ENCODE measurements at regions of chr10 and their contacts with region 1.

Region 1: DNA sequence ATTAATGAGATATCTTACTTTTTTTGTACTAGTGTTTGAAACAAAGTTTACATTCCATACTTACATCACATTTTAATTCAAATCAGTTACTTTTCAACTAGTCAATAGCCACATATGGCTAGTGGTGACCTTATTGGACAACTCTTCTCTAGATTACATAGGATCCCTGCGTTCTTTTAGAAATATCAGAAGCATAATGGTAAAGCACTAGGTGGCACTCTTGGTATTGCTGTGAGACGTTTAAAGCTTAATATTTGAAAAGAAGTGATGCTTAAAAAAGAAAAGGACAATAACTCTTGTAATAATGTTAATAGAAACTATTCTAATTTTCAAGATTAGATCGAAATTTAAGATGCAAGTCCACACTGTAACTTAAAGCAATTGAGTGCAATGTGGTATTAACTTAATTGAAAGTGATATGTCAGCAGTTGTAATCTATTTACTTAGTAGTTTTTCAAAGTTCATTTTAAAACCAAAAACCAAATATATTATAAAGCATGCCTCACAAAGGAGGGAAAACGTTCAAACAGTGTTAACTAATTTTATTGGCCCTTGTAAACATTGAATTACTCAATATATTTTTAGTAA is 339.1 kb downstream of the ATRNL1 start:
- DNase-seq: no peak
- ATAC-seq: 0 out of 2 replicates have a peak, but pooled peaks have one; percentile 65
- H3K4me3 ChIP-seq: no peak overlapping the region
- H3K27ac ChIP-seq: no peak overlapping the region
- H3K4me1 ChIP-seq: no peaks in the 10 kb centered on the region
- H3K27me3 ChIP-seq: no peaks in the 10 kb centered on the region
- CTCF ChIP-seq: peak; percentile 68; the same call in 1 of the 2 replicates

Region 2: GRCh38 chr10:115141254-115141653 is 291.0 kb before region 1 on chr10:
- CTCF ChIA-PET with region 1: no interaction called
- POLR2A ChIA-PET with region 1: interaction called, 12 read pairs
- in situ Hi-C with region 1: no loop called
- intact Hi-C with region 1: no loop called
- DNase-seq: no peak
- ATAC-seq: no peak
- H3K4me3 ChIP-seq: no peak overlapping the region
- H3K27ac ChIP-seq: no peak overlapping the region
- H3K4me1 ChIP-seq: no peaks in the 10 kb centered on the region
- H3K27me3 ChIP-seq: no peaks in the 10 kb centered on the region
- CTCF ChIP-seq: peak; percentile 60; the same call in 1 of the 2 replicates

Region 3: GRCh38 chr10:115417585-115418265 is 14.6 kb before region 1 on chr10:
- CTCF ChIA-PET with region 1: no interaction called
- POLR2A ChIA-PET with region 1: no interaction called
- in situ Hi-C with region 1: no loop called
- intact Hi-C with region 1: no loop called
- DNase-seq: peak; percentile 27
- ATAC-seq: peak; percentile 98
- H3K4me3 ChIP-seq: no peak overlapping the region
- H3K27ac ChIP-seq: no peak overlapping the region
- H3K4me1 ChIP-seq: no peaks in the 10 kb centered on the region
- H3K27me3 ChIP-seq: no peaks in the 10 kb centered on the region
- CTCF ChIP-seq: peak; percentile 78

Region 4: DNA sequence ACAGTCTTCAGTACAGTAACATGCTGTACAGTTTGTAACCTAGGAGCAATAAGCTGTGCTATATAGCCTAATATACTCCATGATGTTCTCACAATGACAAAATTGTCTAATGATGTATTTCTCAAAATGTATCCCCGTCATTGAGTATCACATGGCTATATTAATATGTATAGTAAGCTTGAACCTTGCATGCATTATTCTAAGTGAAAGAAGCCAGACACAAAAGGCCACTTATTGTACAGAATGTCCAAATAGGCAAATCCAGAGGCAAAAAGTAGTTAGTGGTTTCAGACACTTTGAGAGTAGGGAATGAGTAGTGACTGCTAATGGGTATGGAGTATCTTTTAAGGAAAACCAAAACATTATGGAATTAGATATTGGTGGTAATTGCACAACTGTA is 206.0 kb after region 1 on chr10:
- CTCF ChIA-PET with region 1: no interaction called
- POLR2A ChIA-PET with region 1: no interaction called
- in situ Hi-C with region 1: no loop called
- intact Hi-C with region 1: no loop called
- DNase-seq: no peak
- ATAC-seq: no peak
- H3K4me3 ChIP-seq: no peak overlapping the region
- H3K27ac ChIP-seq: no peak overlapping the region
- H3K4me1 ChIP-seq: no peaks in the 10 kb centered on the region
- H3K27me3 ChIP-seq: no peaks in the 10 kb centered on the region
- CTCF ChIP-seq: no peak

Region 5: DNA sequence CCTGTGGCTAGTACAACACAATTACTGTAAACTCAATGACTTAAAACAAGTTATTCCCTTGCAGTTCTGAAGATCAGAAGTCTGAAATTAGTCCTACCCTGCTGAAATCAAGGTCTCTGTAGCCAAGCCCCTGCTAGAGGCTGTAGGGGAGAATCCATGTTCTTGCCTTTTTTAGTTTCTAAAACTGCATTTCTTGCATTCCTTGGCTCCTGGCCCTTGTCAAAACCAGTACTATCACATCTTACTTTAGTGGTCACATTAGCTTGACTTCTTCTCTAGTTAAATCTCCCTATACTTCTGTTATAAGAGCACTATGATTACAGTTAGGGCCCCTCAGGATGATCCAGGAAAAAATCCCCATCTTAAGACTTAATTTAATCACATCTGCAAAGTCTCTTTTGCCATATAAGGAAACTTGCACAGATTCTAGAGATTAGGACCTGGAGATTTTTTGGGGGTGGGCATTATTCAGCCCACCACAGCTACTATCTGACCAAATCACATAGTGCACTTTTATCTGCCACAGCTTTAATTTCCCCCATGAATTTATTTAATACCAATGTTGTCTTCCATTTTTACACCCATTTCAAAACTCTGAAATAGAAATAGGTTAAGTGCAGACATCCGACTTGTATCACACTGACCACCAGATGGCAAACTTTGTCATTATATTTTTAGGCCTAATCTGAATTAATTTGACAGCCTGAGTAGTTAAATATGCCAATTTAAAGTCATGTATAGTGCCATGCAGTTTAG is 273.9 kb after region 1 on chr10:
- CTCF ChIA-PET with region 1: no interaction called
- POLR2A ChIA-PET with region 1: no interaction called
- in situ Hi-C with region 1: no loop called
- intact Hi-C with region 1: loop called (anchors 5 kb)
- DNase-seq: peak; percentile 8
- ATAC-seq: no peak; the same call in 1 of the 2 replicates
- H3K4me3 ChIP-seq: no peak overlapping the region
- H3K27ac ChIP-seq: no peak overlapping the region
- H3K4me1 ChIP-seq: no peaks in the 10 kb centered on the region
- H3K27me3 ChIP-seq: no peaks in the 10 kb centered on the region
- CTCF ChIP-seq: peak; percentile 68; the same call in 1 of the 2 replicates

Measured in Panc1 (cell line).